ENCODE measurements at regions of chr12 and their contacts with region 1.

Region 1: DNA sequence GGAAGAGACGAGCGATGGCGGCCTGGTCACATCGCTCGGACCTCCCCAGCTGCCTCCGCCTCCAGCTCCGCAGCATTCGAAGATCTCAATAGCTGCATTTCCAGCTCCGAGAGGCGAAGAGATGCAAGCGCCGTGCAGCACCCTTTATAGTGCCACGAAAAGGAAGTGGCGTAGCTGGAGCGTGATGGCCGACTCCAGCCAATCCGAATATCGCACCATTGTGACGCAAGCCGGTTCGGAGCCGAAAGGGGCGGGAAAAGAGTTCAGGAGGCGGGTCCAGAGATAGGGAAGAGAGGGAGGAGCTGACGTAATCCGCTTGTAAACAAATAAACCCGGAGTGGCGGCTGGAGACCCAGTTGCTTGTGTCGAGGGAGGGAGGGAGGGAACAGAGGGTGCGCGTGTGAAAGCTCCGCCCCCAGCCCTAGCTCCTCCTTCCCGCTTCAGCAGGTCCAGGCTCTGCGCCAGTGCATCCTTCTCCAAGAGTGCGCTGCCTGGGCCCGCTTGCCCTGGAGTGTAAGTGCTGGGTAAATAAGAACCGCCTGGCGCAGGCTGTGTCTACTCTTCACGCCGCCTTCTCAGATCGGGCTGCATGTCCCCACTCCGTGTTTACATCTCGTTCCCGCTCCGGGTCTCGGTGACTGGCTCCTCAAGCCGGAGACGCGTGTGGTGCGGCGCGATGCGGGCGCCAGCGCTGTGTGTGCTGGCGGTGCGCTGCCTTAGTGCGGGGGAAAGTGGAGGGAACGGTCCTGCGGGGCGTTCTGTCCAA is at the start of gene BTG1:
- DNase-seq: peak; percentile 99 to 100 (median 99)
- H3K4me3 ChIP-seq: peak within 1 kb of the TSS; percentile 70 to 100 (median 88)
- H3K27ac ChIP-seq: peak within 1 kb of the TSS; percentile 90 to 99 (median 94)
- H3K4me1 ChIP-seq: peaks cover 0 to 19% of the 10 kb centered on the region in 2 donors
- H3K27me3 ChIP-seq: no peaks in the 10 kb centered on the region
- CTCF ChIP-seq: peak in 1 of 6 experiments; percentile 35
- POLR2A ChIP-seq: peak; percentile 99 to 100
- total RNA-seq, gene BTG1: 26.3 to 388 (median 66.4) TPM

Region 2: DNA sequence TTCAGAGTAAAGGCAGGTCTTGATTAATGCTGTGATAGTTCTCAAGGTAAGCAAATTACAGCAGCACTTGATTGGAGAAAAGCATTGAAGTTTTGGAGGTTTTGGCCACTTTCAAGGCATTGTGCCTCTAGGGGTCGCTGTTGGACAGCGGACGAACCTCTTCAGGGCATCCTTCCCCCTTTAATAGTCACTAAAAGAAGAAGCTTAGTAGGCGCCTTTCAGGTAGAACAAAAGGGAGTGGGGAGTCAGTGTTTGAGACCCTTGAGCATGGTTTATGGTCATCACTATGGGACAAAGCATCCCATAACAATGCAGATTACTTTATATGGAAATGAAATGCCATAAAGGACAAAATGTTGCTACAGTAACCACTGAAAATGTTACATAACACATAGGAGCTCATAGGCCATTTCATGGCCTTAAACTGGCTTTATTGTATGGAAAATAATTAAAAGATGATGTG is 763.8 kb before region 1 on chr12:
- intact Hi-C with region 1: loop called in 1 of 2 experiments (anchors 10 kb)
- DNase-seq: peak; percentile 70 to 96 (median 88)
- H3K4me3 ChIP-seq: peak overlapping the region in 3 of 4 donors; percentile 19 to 65 (median 53)
- H3K27ac ChIP-seq: peak overlapping the region; percentile 59 to 86 (median 76)
- H3K4me1 ChIP-seq: peaks cover 5 to 22% of the 10 kb centered on the region in 2 donors
- H3K27me3 ChIP-seq: no peaks in the 10 kb centered on the region
- CTCF ChIP-seq: peak; percentile 84 to 95 (median 90)
- POLR2A ChIP-seq: no peak

Region 3: DNA sequence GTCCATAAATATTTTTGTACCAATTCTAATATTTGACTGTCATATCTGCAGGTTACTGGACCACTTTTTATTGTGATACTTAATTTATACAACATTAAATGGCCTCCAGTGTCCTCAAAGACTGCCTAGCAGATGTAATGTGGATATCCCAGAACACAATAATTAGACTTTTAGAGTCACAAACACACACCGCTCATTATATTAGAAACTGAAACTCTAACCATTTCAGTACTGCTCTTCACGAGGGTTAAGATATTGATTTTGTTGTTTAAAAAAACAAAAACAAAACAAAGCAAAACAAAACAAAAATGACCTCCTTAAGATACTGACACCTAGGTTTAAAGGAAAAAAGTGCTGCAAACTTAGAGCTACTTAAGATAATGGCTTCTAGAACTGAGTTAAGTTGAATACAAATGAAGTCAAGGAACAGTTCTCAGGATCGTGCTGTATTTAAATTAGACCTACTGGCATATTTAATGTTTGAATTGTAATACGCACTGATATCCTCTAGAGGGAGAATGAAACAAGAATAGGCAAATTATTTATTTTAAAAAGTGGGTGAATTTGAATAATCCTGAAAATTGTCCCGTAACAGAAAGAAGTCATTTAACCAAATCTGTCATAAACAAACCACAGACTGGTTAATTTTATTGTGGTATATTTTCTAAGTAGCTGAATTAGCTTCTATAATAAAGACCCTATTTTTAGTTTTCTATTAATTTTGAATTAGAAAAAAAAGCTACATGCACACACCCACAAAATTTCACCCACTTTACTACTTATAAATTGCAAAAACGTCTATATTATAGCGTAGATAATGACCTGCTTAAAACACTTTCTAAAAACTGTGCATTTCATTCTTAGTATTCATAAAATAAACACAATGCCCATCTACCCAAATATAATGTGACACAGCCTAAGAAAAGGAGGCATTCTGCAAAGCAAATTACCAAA is 568.1 kb before region 1 on chr12:
- intact Hi-C with region 1: loop called in 1 of 2 experiments (anchors 10 kb)
- DNase-seq: no peak
- H3K4me3 ChIP-seq: peak overlapping the region in 1 of 4 donors; percentile 52
- H3K27ac ChIP-seq: peak overlapping the region in 1 of 5 donors; percentile 50
- H3K4me1 ChIP-seq: peaks cover 0 to 13% of the 10 kb centered on the region in 2 donors
- H3K27me3 ChIP-seq: no peaks in the 10 kb centered on the region
- CTCF ChIP-seq: peak; percentile 58 to 84 (median 76)
- POLR2A ChIP-seq: no peak

Region 4: GRCh38 chr12:91811481-91812287 is 334.2 kb before region 1 on chr12:
- intact Hi-C with region 1: loop called in 1 of 2 experiments (anchors 10 kb)
- DNase-seq: peak; percentile 58 to 91 (median 76)
- H3K4me3 ChIP-seq: no peak overlapping the region
- H3K27ac ChIP-seq: no peak overlapping the region
- H3K4me1 ChIP-seq: no peaks in the 10 kb centered on the region
- H3K27me3 ChIP-seq: no peaks in the 10 kb centered on the region
- CTCF ChIP-seq: peak; percentile 63 to 88 (median 74)
- POLR2A ChIP-seq: no peak

Region 5: DNA sequence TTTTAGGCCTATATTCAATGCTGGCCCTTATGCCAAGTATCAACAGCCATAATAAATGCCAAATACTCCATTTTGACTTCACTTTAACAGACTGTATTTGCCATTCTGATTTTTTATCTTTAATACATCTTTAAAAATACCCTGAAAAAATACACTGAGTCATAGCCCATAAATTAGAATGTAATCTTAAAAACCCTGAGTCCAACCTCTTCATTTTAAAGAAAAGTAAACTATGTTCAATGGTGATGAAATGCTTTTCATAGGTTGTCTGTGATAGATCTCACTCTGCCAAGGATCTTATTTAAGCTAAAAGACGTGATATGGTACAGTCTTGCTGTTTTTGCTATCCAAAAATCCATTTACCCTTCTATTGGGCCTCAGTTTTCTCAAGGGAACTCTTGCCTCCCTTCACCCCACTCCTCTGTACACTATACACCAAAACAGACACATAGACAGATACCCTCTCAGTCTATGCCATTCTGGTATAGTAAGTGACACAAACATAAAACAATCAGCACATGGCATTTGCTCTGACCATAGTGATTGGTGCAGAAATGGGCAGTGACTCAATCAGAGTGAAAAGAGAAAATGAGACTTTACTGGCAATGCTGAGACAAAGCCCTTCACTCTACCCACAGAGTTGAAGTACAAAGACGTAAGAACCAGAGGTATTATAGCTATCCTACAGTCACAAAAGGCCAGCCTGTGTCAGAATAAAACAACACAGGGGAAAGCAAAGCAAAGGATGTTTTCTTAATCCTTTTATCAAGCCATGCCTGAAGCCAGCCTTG is 49.4 kb before region 1 on chr12:
- intact Hi-C with region 1: no loop called
- DNase-seq: no peak
- H3K4me3 ChIP-seq: no peak overlapping the region
- H3K27ac ChIP-seq: peak overlapping the region in 3 of 5 donors; percentile 23 to 68 (median 23)
- H3K4me1 ChIP-seq: peaks cover 9 to 21% of the 10 kb centered on the region in 2 donors
- H3K27me3 ChIP-seq: no peaks in the 10 kb centered on the region
- CTCF ChIP-seq: no peak
- POLR2A ChIP-seq: no peak

Region 6: GRCh38 chr12:92570056-92570753 is 424.3 kb after region 1 on chr12:
- intact Hi-C with region 1: loop called in 1 of 2 experiments (anchors 5 kb)
- DNase-seq: peak; percentile 60 to 90 (median 80)
- H3K4me3 ChIP-seq: no peak overlapping the region
- H3K27ac ChIP-seq: no peak overlapping the region
- H3K4me1 ChIP-seq: peaks cover 0 to 23% of the 10 kb centered on the region in 2 donors
- H3K27me3 ChIP-seq: no peaks in the 10 kb centered on the region
- CTCF ChIP-seq: peak; percentile 76 to 95 (median 88)
- POLR2A ChIP-seq: peak in 1 of 2 donors; percentile 17